PC-3 (cell line): ENCODE measurements at regions of chr5 and their contacts with region 1.

Region 1: DNA sequence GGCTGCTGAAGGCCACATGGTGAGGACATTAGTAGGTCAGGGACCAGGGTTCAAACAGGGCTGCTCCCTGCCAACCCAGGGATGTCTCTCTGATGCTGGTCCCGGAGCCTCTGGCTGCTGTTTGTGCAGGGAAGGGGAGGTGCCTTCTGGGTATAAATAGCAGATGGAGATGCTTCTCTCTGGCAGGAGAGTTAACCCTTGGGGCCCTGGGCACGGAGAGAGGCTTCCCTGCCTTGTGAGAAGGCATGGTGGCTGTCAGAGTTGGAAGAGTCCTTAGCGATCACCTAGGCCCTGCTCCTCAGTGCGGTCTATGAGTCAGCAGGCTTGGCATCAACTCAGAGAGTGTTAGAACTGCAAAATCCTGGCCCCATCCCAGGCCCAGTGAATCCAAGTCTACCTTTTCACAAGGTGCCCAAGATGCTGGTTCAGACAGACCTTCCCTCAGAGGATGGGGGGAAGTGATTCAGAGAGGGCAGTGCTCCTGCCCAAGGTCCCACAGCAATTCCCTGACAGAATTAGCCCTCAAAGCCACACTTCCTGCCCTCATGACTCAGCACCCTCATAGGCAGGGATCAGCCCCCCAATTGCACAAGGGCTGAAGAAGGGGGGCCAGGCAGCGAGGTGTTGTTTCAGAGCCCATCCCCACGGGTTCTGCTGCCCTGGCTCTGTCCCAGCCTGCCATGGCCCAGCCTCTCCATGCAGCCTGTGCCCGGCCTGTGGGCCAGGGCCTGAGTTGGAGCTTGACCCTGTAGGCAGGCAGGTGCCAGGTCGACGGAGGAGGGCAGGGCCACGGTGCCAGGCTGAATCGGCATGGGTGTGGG is 25.6 kb downstream of the CAMK2A start:
- DNase-seq: peak; percentile 100
- ATAC-seq: peak; percentile 85
- H3K4me3 ChIP-seq: no peak overlapping the region
- H3K27ac ChIP-seq: peak overlapping the region; percentile 71
- H3K4me1 ChIP-seq: peaks cover 46% of the 10 kb centered on the region
- H3K27me3 ChIP-seq: no peaks in the 10 kb centered on the region
- CTCF ChIP-seq: no peak

Region 2: GRCh38 chr5:150321816-150322557 is 58.0 kb after region 1 on chr5:
- CTCF ChIA-PET with region 1: no interaction called
- POLR2A ChIA-PET with region 1: no interaction called
- intact Hi-C with region 1: loop called (anchors 1 kb)
- DNase-seq: peak; percentile 95
- ATAC-seq: peak; percentile 85
- H3K4me3 ChIP-seq: no peak overlapping the region
- H3K27ac ChIP-seq: peak overlapping the region; percentile 42
- H3K4me1 ChIP-seq: peaks cover 58% of the 10 kb centered on the region
- H3K27me3 ChIP-seq: no peaks in the 10 kb centered on the region
- CTCF ChIP-seq: no peak